Heart left ventricle (tissue), 16 donors: ENCODE measurements at regions of chr5 and their contacts with region 1.

Region 1: DNA sequence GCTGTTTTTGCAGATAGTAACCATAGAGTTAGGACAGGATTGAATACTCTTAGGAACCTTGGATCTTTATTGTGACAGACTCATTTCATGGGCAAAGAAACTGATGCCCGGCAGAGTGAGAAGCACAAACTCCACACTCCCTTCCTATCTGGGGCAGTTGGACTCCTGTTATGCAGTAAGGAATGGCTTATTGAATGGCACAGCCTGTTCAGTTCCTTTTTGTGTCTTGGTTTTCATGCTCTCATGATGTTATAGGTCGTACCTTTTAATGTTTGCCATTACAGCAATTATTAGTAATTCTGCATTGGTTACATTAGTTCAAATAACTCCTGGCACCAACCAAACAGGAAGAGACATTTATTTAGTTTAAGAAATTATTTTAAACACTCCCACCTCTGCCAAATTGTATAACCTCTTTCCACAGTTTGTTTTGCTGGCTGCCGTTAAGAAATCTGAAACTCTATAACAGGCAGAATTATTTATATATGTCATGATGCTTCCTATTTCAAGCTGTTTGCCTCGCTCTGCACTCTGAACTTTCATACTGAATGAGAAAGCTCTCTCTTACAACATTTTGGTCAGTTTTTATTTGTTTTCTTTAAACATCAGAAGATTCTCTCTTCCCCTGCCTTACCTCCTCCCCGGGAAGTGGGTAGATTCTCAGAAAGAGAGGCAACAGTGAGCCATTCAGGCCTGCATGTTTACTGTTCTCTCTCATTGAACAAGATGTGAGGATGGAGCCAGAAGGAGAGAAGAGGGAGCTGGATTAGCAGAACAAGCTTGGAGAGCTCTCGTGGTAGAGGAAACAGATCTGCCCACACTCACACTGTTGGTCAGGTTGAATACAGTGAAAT is 144.4 kb downstream of the ARHGEF28 start:
- DNase-seq: no peak
- ATAC-seq: no peak
- H3K4me3 ChIP-seq: no peak overlapping the region
- H3K27ac ChIP-seq: no peak overlapping the region
- H3K4me1 ChIP-seq: no peaks in the 10 kb centered on the region
- H3K27me3 ChIP-seq: no peaks in the 10 kb centered on the region
- CTCF ChIP-seq: no peak
- POLR2A ChIP-seq: no peak

Region 2: DNA sequence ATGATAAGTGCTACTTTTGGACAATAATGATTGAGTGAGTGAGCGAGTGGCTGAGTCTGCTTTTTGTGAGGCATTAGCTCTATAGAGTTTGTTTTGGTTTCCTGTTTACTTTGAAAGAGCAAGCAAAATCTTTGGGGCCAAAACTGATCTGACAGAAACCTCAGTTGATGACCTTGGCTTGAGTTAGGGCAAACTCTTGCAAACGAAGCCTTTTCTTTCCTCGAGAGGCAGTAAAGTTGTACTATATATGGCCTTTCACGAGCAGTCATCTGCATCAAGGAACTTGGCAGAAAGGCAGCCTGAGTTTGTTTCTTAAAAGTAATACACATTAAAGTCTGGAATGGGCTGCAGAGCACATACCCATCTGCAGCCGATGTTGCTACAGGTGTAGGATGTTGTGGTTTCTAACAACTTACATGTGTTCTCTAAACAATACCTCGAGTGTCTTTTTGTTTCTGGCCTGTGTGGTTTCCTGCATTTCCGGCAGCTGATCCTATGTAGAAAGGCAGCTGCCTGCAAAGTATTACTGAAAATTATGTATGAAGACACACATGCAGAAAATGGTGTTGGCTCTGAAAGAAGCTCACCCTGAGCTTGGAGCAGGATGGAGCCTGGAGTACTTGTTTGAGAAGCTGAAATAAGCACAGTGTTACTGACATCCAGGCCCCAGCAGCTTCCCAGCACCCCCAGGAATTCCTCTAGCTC is 382.6 kb before region 1 on chr5:
- intact Hi-C with region 1: no loop called
- DNase-seq: no peak
- ATAC-seq: no peak
- H3K4me3 ChIP-seq: no peak overlapping the region
- H3K27ac ChIP-seq: no peak overlapping the region
- H3K4me1 ChIP-seq: no peaks in the 10 kb centered on the region
- H3K27me3 ChIP-seq: peaks cover 4 to 72% (median 26%) of the 10 kb centered on the region in 9 donors
- CTCF ChIP-seq: no peak
- POLR2A ChIP-seq: no peak

Region 3: GRCh38 chr5:73693481-73694061 is 76.8 kb before region 1 on chr5:
- intact Hi-C with region 1: loop called in 1 of 10 experiments (anchors 10 kb)
- DNase-seq: no peak
- ATAC-seq: no peak
- H3K4me3 ChIP-seq: no peak overlapping the region
- H3K27ac ChIP-seq: peak overlapping the region in 2 of 12 donors; percentile 9 to 42
- H3K4me1 ChIP-seq: peaks cover 0 to 28% (median 2%) of the 10 kb centered on the region in 12 donors
- H3K27me3 ChIP-seq: no peaks in the 10 kb centered on the region
- CTCF ChIP-seq: peak in 8 of 12 donors; percentile 10 to 55 (median 26)
- POLR2A ChIP-seq: no peak